Activated CD4-positive, alpha-beta memory T cell treated with anti-CD3 and anti-CD28 coated beads for 36 hours (primary cell): ENCODE measurements at regions of chr7 and their contacts with region 1.

Region 1: GRCh38 chr7:48299580-48300169 is 128.4 kb downstream of the ABCA13 start:
- DNase-seq: peak; percentile 68
- H3K4me3 Mint-ChIP-seq: no peak overlapping the region
- H3K27ac Mint-ChIP-seq: no peak overlapping the region
- H3K4me1 Mint-ChIP-seq: peaks cover 9% of the 10 kb centered on the region
- H3K27me3 Mint-ChIP-seq: peaks cover 2% of the 10 kb centered on the region

Region 2: GRCh38 chr7:48130658-48131108 is 169.0 kb before region 1 on chr7:
- CTCF ChIA-PET with region 1: interaction called, 4 read pairs
- POLR2A ChIA-PET with region 1: no interaction called
- intact Hi-C with region 1: loop called (anchors 2 kb)
- DNase-seq: no peak
- H3K4me3 Mint-ChIP-seq: no peak overlapping the region
- H3K27ac Mint-ChIP-seq: no peak overlapping the region
- H3K4me1 Mint-ChIP-seq: peaks cover 5% of the 10 kb centered on the region
- H3K27me3 Mint-ChIP-seq: peaks cover 22% of the 10 kb centered on the region

Region 3: DNA sequence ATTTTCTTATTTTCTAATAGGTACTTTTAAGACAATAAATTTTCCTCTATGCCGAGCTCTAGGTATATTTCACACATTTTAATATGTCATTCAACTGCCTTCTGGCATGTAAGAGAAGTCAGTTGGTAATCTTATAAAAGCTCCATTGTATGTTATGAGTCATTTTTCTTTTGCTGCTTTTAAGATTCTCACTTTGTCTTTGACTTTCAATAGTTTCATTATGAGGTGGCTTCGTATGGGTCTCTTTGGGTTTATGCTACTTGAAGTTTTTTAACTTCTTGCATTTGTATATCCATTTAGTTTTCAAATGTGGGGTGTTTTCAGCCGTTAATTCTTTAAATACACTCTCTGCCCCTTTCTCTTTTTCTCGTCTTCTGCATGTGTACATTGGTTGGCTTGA is 47.9 kb before region 1 on chr7:
- CTCF ChIA-PET with region 1: interaction called, 4 read pairs
- POLR2A ChIA-PET with region 1: interaction called, 4 read pairs
- intact Hi-C with region 1: loop called (anchors 1 kb)
- DNase-seq: no peak
- H3K4me3 Mint-ChIP-seq: no peak overlapping the region
- H3K27ac Mint-ChIP-seq: no peak overlapping the region
- H3K4me1 Mint-ChIP-seq: peaks cover 13% of the 10 kb centered on the region
- H3K27me3 Mint-ChIP-seq: peaks cover 4% of the 10 kb centered on the region

Region 4: GRCh38 chr7:49852619-49853462 is 1553.2 kb after region 1 on chr7:
- CTCF ChIA-PET with region 1: no interaction called
- POLR2A ChIA-PET with region 1: no interaction called
- intact Hi-C with region 1: loop called (anchors 1 kb)
- DNase-seq: peak; percentile 24
- H3K4me3 Mint-ChIP-seq: no peak overlapping the region
- H3K27ac Mint-ChIP-seq: no peak overlapping the region
- H3K4me1 Mint-ChIP-seq: no peaks in the 10 kb centered on the region
- H3K27me3 Mint-ChIP-seq: no peaks in the 10 kb centered on the region

Region 5: GRCh38 chr7:50068961-50069551 is 1769.4 kb after region 1 on chr7:
- CTCF ChIA-PET with region 1: no interaction called
- POLR2A ChIA-PET with region 1: no interaction called
- intact Hi-C with region 1: loop called (anchors 2 kb)
- DNase-seq: peak; percentile 46
- H3K4me3 Mint-ChIP-seq: peak overlapping the region; percentile 85
- H3K27ac Mint-ChIP-seq: peak overlapping the region; percentile 46
- H3K4me1 Mint-ChIP-seq: peaks cover 19% of the 10 kb centered on the region
- H3K27me3 Mint-ChIP-seq: no peaks in the 10 kb centered on the region